Activated CD4-positive, alpha-beta T cell treated with anti-CD3 and anti-CD28 coated beads for 36 hours (primary cell): ENCODE measurements at regions of chr15 and their contacts with region 1.

Region 1: GRCh38 chr15:89087830-89088604 is at the start of gene ABHD2:
- DNase-seq: peak; percentile 99
- ATAC-seq: peak; percentile 98
- H3K4me3 Mint-ChIP-seq: no peak within 1 kb of the TSS
- H3K27ac Mint-ChIP-seq: peak within 1 kb of the TSS; percentile 9
- H3K4me1 Mint-ChIP-seq: peaks cover 36% of the 10 kb centered on the region
- H3K27me3 Mint-ChIP-seq: no peaks in the 10 kb centered on the region
- total RNA-seq, gene ABHD2: 41.5 to 52.1 TPM

Region 2: GRCh38 chr15:88546248-88547129 is 541.5 kb before region 1 on chr15 and contains the start of gene DET1:
- CTCF ChIA-PET with region 1: no interaction called
- POLR2A ChIA-PET with region 1: no interaction called
- intact Hi-C with region 1: loop called in 1 of 2 experiments (anchors 1 kb)
- DNase-seq: peak; percentile 98
- ATAC-seq: peak; percentile 97
- H3K4me3 Mint-ChIP-seq: peak within 1 kb of the TSS; percentile 83
- H3K27ac Mint-ChIP-seq: peak within 1 kb of the TSS; percentile 91
- H3K4me1 Mint-ChIP-seq: peaks cover 13% of the 10 kb centered on the region
- H3K27me3 Mint-ChIP-seq: no peaks in the 10 kb centered on the region
- total RNA-seq, gene DET1: 2.7 to 3.0 TPM

Region 3: GRCh38 chr15:88913017-88913849 is 174.8 kb before region 1 on chr15 and contains the start of gene MFGE8:
- CTCF ChIA-PET with region 1: no interaction called
- POLR2A ChIA-PET with region 1: no interaction called
- intact Hi-C with region 1: loop called in 1 of 2 experiments (anchors 5 kb)
- DNase-seq: peak; percentile 83
- ATAC-seq: peak; percentile 95
- H3K4me3 Mint-ChIP-seq: peak within 1 kb of the TSS; percentile 79
- H3K27ac Mint-ChIP-seq: peak within 1 kb of the TSS; percentile 82
- H3K4me1 Mint-ChIP-seq: peaks cover 16% of the 10 kb centered on the region
- H3K27me3 Mint-ChIP-seq: no peaks in the 10 kb centered on the region
- total RNA-seq, gene MFGE8: 17.0 to 18.6 TPM

Region 4: DNA sequence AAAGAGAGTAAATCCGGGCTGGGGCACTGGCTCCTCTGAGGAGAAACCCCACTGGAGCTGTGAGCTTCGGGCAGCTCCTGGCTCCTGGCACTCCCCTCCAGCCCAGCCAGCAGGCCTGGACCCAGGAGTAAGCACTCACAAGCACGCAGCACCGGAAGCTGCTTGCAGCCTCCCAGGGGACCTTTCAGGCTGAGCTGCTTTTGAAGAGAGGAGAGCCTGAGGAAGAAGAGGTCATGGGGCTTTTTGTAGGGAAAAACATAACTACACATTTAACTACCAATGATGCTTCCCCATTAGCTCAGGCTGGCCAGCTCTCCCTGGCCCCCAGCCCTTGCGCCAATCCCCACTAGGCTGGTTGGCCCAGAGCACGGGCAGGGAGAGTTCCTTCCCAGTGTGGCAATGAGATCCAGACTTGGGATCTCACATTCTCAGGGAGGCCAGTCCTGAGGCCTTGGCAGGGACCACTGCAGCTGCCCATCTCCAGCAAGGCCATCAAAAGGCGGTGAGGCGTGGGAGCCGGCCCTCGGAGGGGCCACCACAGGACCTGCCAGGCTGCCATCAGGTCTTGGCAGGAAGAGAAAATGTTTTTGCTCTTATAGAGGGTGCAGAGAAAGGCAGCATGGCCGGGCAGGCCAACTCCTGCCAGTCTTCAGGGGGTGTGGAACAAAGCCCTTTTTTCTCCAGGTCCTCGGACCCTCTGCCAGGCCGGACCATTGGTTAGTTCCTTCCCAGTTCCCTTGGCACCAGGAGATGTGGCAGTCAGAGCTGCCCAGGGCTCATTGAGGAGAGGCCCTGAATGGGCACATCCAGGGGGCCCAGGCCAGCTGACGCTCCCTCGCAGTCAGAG is 133.4 kb before region 1 on chr15:
- CTCF ChIA-PET with region 1: no interaction called
- POLR2A ChIA-PET with region 1: no interaction called
- intact Hi-C with region 1: no loop called
- DNase-seq: no peak
- ATAC-seq: no peak
- H3K4me3 Mint-ChIP-seq: no peak overlapping the region
- H3K27ac Mint-ChIP-seq: no peak overlapping the region
- H3K4me1 Mint-ChIP-seq: no peaks in the 10 kb centered on the region
- H3K27me3 Mint-ChIP-seq: no peaks in the 10 kb centered on the region

Region 5: DNA sequence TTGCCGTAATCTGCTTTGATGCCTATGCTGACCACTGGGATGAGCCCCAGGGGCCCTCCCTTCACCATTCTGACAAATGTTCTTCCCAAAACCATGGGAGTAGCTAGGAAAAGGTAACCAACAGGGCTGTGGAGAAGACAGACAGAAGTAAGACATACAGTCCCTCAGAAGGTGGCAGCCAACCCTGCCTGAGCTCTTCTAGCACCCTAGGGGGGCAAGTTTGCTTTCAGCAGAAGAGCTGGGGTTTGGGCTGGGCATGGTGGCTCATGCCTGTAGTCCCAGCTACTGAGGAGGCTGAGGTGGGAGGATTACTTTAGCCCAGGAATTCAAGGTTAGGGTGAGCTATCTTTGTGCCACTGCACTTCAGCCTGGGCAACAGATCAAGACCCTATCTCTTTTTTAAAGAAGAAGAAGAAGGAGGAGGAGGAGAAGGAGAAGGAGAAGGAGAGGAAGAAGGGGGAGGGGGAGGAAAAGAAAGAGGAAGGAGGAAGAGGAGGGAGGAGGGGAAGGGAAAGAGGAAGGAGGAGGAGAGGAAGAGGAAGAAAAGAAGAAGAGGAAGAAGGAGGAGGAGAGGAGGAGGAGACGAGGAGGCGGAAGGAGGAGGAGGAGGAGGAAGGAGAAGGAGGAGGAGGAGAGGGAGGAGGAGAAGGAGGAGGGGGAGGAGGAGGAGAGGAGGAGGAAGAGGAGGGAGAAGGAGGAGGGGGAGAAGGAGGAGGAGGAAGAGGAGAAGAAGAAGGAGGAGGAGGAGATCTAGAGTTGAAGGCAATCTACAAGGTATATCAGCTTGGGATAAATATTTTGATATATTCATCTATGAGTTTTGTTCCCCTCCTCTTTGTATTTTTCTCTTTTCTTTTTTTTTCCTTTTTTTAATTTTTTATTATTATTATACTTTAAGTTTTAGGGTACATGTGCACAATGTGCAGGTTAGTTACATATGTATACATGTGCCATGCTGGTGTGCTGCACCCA is 44.7 kb before region 1 on chr15:
- CTCF ChIA-PET with region 1: no interaction called
- POLR2A ChIA-PET with region 1: no interaction called
- intact Hi-C with region 1: no loop called
- DNase-seq: no peak
- ATAC-seq: no peak
- H3K4me3 Mint-ChIP-seq: no peak overlapping the region
- H3K27ac Mint-ChIP-seq: no peak overlapping the region
- H3K4me1 Mint-ChIP-seq: no peaks in the 10 kb centered on the region
- H3K27me3 Mint-ChIP-seq: no peaks in the 10 kb centered on the region

Region 6: GRCh38 chr15:89075846-89076245 is 12.2 kb before region 1 on chr15:
- CTCF ChIA-PET with region 1: interaction called, 10 read pairs
- POLR2A ChIA-PET with region 1: interaction called, 3 read pairs
- intact Hi-C with region 1: no loop called
- DNase-seq: no peak
- ATAC-seq: no peak
- H3K4me3 Mint-ChIP-seq: no peak overlapping the region
- H3K27ac Mint-ChIP-seq: no peak overlapping the region
- H3K4me1 Mint-ChIP-seq: peaks cover 22% of the 10 kb centered on the region
- H3K27me3 Mint-ChIP-seq: peaks cover 2% of the 10 kb centered on the region

Region 7: GRCh38 chr15:89129123-89129815 is 41.3 kb after region 1 on chr15:
- CTCF ChIA-PET with region 1: interaction called, 4 read pairs
- POLR2A ChIA-PET with region 1: interaction called, 4 read pairs
- intact Hi-C with region 1: loop called in 1 of 2 experiments (anchors 2 kb)
- DNase-seq: peak; percentile 75
- ATAC-seq: peak; percentile 25
- H3K4me3 Mint-ChIP-seq: no peak overlapping the region
- H3K27ac Mint-ChIP-seq: no peak overlapping the region
- H3K4me1 Mint-ChIP-seq: peaks cover 28% of the 10 kb centered on the region
- H3K27me3 Mint-ChIP-seq: no peaks in the 10 kb centered on the region

Region 8: DNA sequence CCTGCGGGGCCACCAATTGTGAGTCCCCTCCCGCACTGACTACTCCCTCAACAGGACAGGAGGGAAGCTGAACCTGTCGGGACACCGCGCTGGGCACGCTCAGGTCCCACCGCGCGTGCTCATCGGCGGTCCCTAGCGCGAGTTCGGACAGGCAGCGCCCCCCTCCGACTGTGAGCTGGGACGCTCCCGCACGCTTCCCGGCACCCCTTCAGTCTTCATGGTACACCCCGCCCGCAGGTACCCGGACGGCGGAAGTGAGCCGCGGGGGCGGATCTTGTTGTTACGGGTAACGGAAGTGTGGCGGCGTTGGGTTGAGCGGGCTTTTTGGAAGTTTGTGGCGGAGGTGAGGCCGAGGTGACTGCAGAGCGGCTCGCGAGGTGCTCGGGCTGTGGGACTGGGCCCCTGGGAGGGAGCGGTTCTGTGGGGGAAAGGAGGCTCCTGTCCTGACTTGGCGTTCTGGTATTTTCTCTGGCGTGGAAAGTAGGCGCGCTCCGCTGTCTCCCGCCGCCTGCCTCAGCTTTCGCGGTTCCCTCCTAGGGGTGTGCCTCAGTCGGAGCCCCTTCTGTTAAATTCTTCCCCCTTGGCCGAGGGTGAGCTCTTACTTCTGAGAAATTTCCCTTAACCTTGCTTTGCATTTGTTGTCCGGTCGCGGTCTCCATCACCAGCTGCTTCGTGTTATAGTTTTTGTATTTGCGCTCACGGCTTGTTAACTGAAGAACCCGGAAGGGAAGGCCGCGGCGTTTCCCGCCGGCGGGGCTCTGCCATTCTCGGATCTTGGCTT is 155.9 kb after region 1 on chr15 and contains the start of gene FANCI:
- CTCF ChIA-PET with region 1: interaction called, 3 read pairs
- POLR2A ChIA-PET with region 1: no interaction called
- intact Hi-C with region 1: loop called in 1 of 2 experiments (anchors 1 kb)
- DNase-seq: peak; percentile 98
- ATAC-seq: peak; percentile 96
- H3K4me3 Mint-ChIP-seq: peak within 1 kb of the TSS; percentile 93
- H3K27ac Mint-ChIP-seq: peak within 1 kb of the TSS; percentile 93
- H3K4me1 Mint-ChIP-seq: peaks cover 29% of the 10 kb centered on the region
- H3K27me3 Mint-ChIP-seq: no peaks in the 10 kb centered on the region
- total RNA-seq, gene FANCI: 150 to 199 TPM

Region 9: DNA sequence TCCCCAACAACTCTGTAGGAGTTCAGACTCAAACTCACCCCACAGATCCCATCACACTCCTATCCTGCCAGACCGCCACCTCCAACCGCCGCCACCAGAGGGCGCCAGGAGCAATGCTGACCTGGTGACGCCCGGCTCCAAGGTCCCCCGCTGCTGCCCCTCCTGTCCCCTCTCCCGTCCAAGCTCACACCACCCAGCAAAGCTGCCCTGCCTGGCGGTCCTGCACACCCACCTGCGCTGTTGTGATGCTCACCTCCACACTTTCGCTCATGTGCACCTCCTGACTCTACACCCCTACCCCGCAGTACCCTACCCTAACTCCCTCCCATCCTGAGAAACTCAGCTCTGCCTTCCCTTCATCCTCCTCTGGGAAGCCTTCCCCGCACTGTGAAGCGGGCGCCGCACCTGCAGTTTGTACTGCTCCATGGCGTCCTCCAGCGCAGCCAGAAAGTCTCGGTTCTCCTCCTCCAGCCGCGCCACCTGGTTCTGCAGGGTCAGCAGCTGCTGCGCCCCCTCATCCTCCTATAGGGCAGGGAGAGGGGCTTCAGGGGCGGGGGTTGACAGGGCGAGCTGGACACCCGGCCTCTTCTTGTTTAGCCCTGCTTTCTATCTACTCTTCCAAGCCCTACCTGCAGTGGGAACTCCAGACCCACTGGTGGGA is 559.3 kb after region 1 on chr15:
- CTCF ChIA-PET with region 1: no interaction called
- POLR2A ChIA-PET with region 1: no interaction called
- intact Hi-C with region 1: no loop called
- DNase-seq: peak; percentile 86
- ATAC-seq: peak; percentile 90
- H3K4me3 Mint-ChIP-seq: no peak overlapping the region
- H3K27ac Mint-ChIP-seq: no peak overlapping the region
- H3K4me1 Mint-ChIP-seq: no peaks in the 10 kb centered on the region
- H3K27me3 Mint-ChIP-seq: peaks cover 6% of the 10 kb centered on the region